MCF 10A (cell line): ENCODE measurements at regions of chr2 and their contacts with region 1.

Region 1: DNA sequence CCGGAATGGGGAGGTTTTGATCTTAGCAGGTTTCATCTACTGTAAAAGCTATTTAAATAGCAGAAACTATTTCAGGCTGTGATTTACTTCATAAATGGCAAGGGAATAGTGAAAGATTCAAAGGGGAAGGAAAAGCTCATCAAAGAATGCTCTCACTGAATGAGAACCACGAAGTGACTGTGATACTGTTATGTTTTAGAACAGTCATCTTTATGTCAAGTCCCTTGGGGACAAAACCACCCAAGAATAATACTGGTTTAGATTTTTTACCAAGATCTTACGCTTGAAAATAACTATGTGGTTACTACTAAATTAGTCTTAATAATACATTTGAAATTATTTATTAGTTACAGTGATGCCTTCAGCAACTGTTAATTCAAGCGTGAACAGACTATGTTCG is 28.1 kb downstream of the FARSB start:
- DNase-seq: no peak
- H3K4me3 Mint-ChIP-seq: no peak overlapping the region
- H3K27ac Mint-ChIP-seq: no peak overlapping the region
- H3K4me1 Mint-ChIP-seq: no peaks in the 10 kb centered on the region
- H3K27me3 Mint-ChIP-seq: no peaks in the 10 kb centered on the region
- CTCF ChIP-seq: no peak

Region 2: GRCh38 chr2:222364285-222364895 is 263.4 kb before region 1 on chr2:
- CTCF ChIA-PET with region 1: no interaction called
- POLR2A ChIA-PET with region 1: no interaction called
- intact Hi-C with region 1: no loop called
- DNase-seq: peak; percentile 65
- H3K4me3 Mint-ChIP-seq: peak overlapping the region; percentile 41
- H3K27ac Mint-ChIP-seq: peak overlapping the region; percentile 75
- H3K4me1 Mint-ChIP-seq: peaks cover 14% of the 10 kb centered on the region
- H3K27me3 Mint-ChIP-seq: no peaks in the 10 kb centered on the region
- CTCF ChIP-seq: no peak

Region 3: DNA sequence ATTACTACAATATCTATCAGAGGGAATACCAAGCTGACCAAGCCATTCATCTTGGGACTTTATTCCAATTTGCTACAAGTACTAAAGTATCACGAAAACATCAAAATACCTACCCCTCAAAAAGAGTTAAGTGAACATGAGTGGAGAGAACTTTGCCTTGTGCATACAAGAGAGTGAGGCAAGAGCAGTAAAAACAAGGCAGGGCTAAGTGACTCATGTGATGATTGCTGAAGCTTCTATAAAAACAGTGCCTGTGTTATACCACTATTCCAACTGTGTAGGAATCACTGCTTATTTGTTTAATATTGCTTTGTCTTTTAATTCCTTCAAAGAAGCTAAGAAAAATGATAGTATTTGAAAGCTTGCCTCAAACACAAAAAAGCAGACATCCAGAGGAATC is 33.1 kb before region 1 on chr2:
- CTCF ChIA-PET with region 1: interaction called, 4 read pairs
- POLR2A ChIA-PET with region 1: interaction called, 3 read pairs
- intact Hi-C with region 1: loop called (anchors 5 kb)
- DNase-seq: peak; percentile 54
- H3K4me3 Mint-ChIP-seq: no peak overlapping the region
- H3K27ac Mint-ChIP-seq: peak overlapping the region; percentile 7
- H3K4me1 Mint-ChIP-seq: peaks cover 11% of the 10 kb centered on the region
- H3K27me3 Mint-ChIP-seq: no peaks in the 10 kb centered on the region
- CTCF ChIP-seq: no peak